ENCODE measurements at regions of chr7 and their contacts with region 1.

Region 1: DNA sequence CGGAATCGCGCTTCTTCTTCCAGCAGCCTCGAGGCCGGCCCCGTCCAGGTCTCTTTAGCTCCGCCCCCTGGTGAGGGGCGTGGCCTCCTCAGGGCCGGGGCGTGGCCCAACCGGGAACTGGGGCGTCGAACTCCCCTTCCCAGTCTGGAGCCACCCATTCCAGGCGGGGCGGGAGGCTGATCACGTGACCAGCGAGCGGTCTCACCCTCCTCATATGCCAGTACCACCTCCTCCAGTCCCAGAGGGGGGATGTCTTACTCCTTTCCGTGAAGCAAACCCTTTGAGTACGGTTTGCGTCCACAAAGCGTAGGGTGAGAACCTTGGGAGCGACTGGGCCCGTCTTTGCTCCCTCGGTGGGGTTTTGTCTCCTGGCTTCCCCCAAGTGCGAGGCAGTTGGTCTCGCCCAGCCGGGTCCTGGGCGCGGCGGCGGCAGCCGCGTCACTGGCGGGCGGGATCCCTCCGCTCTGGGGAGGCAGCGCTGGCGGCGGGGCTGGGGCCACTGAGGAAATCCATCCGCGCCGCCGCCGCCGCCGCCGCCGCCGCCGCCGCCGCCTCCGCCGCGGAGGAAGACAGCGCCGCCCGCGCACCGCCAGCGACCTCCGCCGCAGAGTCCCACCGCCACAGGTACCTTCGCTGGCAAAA is at the start of gene GNB2:
- DNase-seq: peak; percentile 99 to 100
- H3K4me3 ChIP-seq: peak within 1 kb of the TSS; percentile 76 to 94
- H3K27ac ChIP-seq: peak within 1 kb of the TSS; percentile 85 to 92
- H3K4me1 ChIP-seq: no peaks in the 10 kb centered on the region
- H3K27me3 ChIP-seq: no peaks in the 10 kb centered on the region
- CTCF ChIP-seq: peak in 2 of 4 experiments; percentile 9 to 12
- POLR2A ChIP-seq: peak; percentile 72 to 94
- total RNA-seq, gene GNB2: 72.0 to 245 (median 94.3) TPM

Region 2: GRCh38 chr7:100469227-100470044 is 204.0 kb before region 1 on chr7:
- intact Hi-C with region 1: no loop called
- DNase-seq: peak; percentile 89 to 90
- H3K4me3 ChIP-seq: no peak overlapping the region
- H3K27ac ChIP-seq: peak overlapping the region; percentile 47 to 68
- H3K4me1 ChIP-seq: peaks cover 10 to 22% of the 10 kb centered on the region in 2 donors
- H3K27me3 ChIP-seq: no peaks in the 10 kb centered on the region
- CTCF ChIP-seq: peak; percentile 89 to 97 (median 96)
- POLR2A ChIP-seq: no peak

Region 3: GRCh38 chr7:100586266-100587025 is 87.0 kb before region 1 on chr7 and contains the start of gene FBXO24:
- intact Hi-C with region 1: loop called (anchors 10 kb)
- DNase-seq: peak; percentile 99 to 100
- H3K4me3 ChIP-seq: peak within 1 kb of the TSS; percentile 86 to 98
- H3K27ac ChIP-seq: peak within 1 kb of the TSS; percentile 89 to 93
- H3K4me1 ChIP-seq: peaks cover 6 to 23% of the 10 kb centered on the region in 2 donors
- H3K27me3 ChIP-seq: no peaks in the 10 kb centered on the region
- CTCF ChIP-seq: no peak
- POLR2A ChIP-seq: peak; percentile 51 to 55
- total RNA-seq, gene FBXO24: 2.9 to 4.9 TPM in 2 of 4 donors, not detected in the others